Activated CD4-positive, alpha-beta T cell treated with anti-CD3 and anti-CD28 coated beads, Interleukin-2, amount 10 ng/mL, durations not matched to agents 24 days and 14 days (primary cell): ENCODE measurements at regions of chr7 and their contacts with region 1.

Region 1: GRCh38 chr7:726084-726853 is at the start of gene DNAAF5:
- DNase-seq: peak; percentile 97
- H3K4me3 Mint-ChIP-seq: peak within 1 kb of the TSS; percentile 95
- H3K27ac Mint-ChIP-seq: peak within 1 kb of the TSS; percentile 96
- H3K4me1 Mint-ChIP-seq: peaks cover 18% of the 10 kb centered on the region
- H3K27me3 Mint-ChIP-seq: no peaks in the 10 kb centered on the region
- total RNA-seq, gene DNAAF5: 49.4 and 50.6 TPM in 2 replicates

Region 2: GRCh38 chr7:148932-149855 is 577.1 kb before region 1 on chr7:
- intact Hi-C with region 1: loop called (anchors 2 kb)
- DNase-seq: peak; percentile 99
- H3K4me3 Mint-ChIP-seq: peak overlapping the region; percentile 95
- H3K27ac Mint-ChIP-seq: peak overlapping the region; percentile 100
- H3K4me1 Mint-ChIP-seq: peaks cover 14% of the 10 kb centered on the region
- H3K27me3 Mint-ChIP-seq: peaks cover 4% of the 10 kb centered on the region

Region 3: GRCh38 chr7:518630-519483 is 207.4 kb before region 1 on chr7:
- intact Hi-C with region 1: loop called (anchors 2 kb)
- DNase-seq: peak; percentile 82
- H3K4me3 Mint-ChIP-seq: peak overlapping the region; percentile 83
- H3K27ac Mint-ChIP-seq: peak overlapping the region; percentile 71
- H3K4me1 Mint-ChIP-seq: peaks cover 12% of the 10 kb centered on the region
- H3K27me3 Mint-ChIP-seq: peaks cover 38% of the 10 kb centered on the region

Region 4: GRCh38 chr7:584122-584465 is 142.2 kb before region 1 on chr7:
- intact Hi-C with region 1: loop called (anchors 1 kb)
- DNase-seq: peak; percentile 95
- H3K4me3 Mint-ChIP-seq: peak overlapping the region; percentile 86
- H3K27ac Mint-ChIP-seq: peak overlapping the region; percentile 98
- H3K4me1 Mint-ChIP-seq: peaks cover 35% of the 10 kb centered on the region
- H3K27me3 Mint-ChIP-seq: no peaks in the 10 kb centered on the region

Region 5: DNA sequence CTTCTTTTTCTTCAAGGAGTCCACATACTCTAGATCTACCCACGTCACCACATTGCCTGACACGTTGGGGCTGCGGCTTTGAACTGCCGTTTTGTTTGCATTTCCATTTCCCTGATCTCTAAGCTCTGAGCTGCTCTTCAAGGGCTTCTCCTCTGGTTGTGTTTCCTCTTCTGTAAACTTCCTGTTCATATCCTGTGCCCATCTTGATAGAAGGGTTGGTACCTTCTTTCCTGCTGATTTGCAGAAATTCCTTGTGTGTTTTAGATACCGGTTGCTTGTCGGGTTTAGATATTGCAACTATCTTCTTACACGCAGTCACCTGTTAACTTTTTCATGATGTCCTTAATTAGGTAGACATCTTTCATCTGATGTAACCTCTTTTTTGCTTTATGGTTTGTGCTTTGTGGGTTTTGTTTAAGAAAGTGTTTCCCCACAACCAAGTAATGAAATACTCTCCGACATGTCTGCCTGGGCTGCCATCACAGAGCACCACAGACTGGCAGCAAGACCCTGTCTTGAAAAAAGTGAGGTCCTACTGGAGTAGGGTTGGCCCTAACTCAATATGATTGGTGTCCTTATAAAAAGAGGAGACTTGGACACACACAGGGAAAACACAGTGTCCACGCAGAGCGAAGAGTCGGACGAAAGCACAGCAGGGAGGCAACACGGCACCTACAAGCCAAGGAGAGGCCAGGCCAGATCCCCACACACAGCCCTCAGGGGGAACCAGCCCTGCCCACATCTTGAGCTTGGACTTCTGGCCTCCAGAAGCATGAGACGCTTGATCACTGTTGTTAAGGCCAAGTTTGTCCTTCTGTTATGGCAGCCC is 107.5 kb before region 1 on chr7:
- intact Hi-C with region 1: loop called (anchors 1 kb)
- DNase-seq: peak; percentile 92
- H3K4me3 Mint-ChIP-seq: peak overlapping the region; percentile 79
- H3K27ac Mint-ChIP-seq: peak overlapping the region; percentile 99
- H3K4me1 Mint-ChIP-seq: peaks cover 39% of the 10 kb centered on the region
- H3K27me3 Mint-ChIP-seq: no peaks in the 10 kb centered on the region

Region 6: DNA sequence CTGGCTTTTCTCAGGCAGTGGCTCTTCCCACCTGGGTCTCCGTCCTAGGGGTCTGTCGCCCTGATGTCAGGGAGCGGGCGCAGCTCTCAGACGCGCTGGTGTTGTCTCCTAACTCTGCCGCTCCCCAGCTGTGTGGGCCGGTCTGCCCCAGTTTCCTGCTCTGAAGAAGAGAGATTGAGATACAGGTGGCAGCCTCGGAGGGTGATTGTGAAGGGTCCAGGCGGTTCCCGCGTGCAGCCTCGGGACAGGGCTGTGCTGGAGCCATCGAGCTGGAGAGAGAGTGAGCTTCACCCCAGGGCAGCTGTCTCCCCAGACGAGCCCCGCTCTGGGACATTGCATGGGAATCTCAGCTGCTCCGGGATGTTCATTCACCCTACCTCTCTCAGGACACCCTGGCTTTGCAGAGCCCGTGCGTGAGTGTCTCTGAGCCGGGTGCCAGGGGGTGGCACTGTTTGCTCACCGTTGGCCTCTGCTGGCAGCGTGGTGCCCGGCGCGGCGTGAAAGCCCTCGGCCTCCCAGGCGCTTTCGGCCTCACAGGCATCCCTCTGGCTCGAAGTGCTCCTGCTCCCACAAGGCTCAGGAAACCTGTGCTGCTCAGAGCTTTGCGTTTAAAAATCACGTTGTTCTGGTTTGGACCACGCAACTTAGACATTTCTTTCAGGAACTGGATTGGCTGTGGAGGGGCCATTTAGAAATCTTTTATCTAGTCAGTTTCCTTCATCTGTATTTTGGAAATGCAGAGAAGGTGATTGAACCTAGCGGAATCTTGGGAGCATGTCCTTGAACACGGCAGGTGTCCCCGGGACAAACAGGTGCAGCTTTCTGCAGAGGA is 467.5 kb after region 1 on chr7:
- intact Hi-C with region 1: no loop called
- DNase-seq: peak; percentile 81
- H3K4me3 Mint-ChIP-seq: no peak overlapping the region
- H3K27ac Mint-ChIP-seq: no peak overlapping the region
- H3K4me1 Mint-ChIP-seq: peaks cover 22% of the 10 kb centered on the region
- H3K27me3 Mint-ChIP-seq: peaks cover 6% of the 10 kb centered on the region